MCF 10A (cell line): ENCODE measurements at regions of chr7 and their contacts with region 1.

Region 1: DNA sequence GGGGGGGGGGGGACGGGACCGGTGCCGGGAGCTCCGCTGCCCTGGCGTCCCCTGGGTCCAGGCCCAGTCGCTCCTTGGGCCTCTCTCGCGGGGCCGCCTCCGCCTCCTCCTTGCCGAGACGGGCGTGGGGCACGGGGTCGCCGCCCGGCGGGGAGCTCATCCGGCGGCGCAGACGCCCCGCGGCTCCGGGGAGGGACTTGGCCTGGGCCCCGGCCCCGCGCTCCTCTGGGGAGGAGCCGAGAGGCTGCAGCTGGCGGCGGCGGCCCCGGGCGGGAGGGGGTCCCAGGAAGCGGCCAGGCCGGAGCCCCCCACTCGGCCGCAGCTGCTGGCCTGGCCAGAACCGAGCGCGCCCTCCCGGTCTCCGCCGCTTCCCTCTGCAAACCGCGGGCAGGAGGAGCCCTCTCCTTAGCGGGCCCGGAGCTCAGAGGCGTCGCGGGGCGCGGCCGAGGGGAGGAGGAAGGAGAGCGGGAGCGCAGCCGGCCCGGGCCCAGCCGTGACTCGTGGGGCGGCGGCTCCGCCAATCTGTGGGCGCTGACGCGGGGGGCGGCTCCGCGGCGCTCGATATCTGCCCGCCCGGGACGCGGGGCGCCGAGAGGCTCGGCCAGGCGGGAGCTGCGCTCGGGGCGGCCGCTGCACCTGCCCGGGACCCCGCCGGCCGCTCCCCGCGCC is at the start of gene FAM20C:
- DNase-seq: peak; percentile 84
- H3K4me3 Mint-ChIP-seq: peak within 1 kb of the TSS; percentile 75
- H3K27ac Mint-ChIP-seq: no peak within 1 kb of the TSS
- H3K4me1 Mint-ChIP-seq: peaks cover 14% of the 10 kb centered on the region
- H3K27me3 Mint-ChIP-seq: no peaks in the 10 kb centered on the region
- CTCF ChIP-seq: no peak
- total RNA-seq, gene FAM20C: 8.8 and 14.2 TPM in 2 replicates

Region 2: DNA sequence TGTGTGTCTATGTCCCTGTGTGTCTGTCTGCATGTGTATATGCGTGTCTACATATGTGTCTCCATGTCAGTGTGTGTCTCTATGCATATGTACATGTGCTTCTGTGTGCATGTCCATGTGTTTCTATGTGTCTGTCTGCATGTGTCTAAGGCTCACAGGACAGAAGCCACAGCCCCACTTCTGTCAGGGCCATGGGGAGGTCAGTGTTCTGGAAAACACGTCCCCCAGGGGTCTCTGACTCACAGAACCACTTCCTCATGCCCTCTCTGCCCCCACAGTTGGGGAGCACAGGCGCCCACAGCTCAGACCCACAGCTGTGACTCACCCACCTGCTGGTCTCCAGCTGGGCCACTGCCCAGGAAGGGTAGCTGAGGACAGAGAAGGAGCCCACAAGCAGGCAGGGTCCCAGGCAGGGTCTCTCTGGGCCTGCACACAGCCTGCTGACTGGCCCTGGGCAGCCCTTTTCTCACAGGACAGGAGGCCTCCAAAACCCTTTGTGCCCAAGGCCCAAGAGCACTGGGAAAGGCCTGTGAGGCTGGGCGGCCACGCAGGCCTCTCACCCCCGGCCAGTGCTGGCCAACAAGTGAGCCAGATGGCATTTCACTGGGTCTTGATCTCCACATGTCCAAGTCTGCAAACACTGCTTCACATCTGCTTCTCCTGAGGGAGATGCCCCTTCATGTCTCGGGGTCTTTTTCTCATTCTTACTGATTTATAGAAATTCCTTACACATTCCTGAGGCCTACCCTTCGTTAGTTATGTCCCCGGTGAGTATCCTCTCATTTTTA is 102.7 kb before region 1 on chr7:
- CTCF ChIA-PET with region 1: interaction called, 3 read pairs
- POLR2A ChIA-PET with region 1: interaction called, 11 read pairs
- intact Hi-C with region 1: no loop called
- DNase-seq: peak; percentile 93
- H3K4me3 Mint-ChIP-seq: peak overlapping the region; percentile 34
- H3K27ac Mint-ChIP-seq: peak overlapping the region; percentile 68
- H3K4me1 Mint-ChIP-seq: peaks cover 38% of the 10 kb centered on the region
- H3K27me3 Mint-ChIP-seq: no peaks in the 10 kb centered on the region
- CTCF ChIP-seq: no peak

Region 3: DNA sequence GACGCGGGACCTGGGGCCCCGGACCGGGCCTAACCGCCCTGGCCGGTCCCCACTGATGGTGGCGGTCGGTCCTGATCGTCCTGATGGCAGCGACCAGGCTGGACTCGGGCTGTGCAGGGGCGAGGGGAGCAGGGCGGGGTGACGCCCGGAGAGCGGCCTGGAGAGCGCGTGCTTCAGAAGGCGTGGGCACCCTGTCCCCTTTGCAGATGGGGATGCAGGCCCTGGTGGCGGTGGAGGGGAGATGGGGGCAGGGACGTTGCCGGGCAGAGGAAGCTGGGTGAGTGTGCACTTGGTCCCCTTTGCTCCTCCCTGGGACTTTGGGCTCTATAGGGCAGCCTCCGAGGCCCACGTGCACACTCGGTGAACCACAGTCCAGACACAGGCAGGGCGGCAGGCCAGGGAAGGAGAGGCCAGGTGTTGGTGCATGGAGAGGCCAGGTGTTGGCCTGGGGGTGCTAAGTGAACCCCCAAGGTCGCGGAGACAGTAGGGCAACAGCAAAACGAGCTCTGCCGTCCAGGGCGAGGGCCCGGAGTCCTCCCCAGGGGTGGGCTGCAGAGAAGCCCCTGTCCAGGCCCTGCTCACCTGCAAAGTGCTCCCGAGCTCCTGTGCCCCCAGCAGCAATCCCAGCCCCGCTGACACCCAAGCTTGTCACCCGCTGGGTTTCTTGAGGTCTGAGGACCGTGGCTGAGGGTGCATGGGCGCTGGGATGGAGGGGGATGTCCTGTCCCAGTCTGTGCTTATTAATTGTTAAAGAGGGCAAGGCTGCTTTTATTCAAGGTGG is 42.1 kb before region 1 on chr7:
- CTCF ChIA-PET with region 1: no interaction called
- POLR2A ChIA-PET with region 1: interaction called, 13 read pairs
- intact Hi-C with region 1: no loop called
- DNase-seq: no peak
- H3K4me3 Mint-ChIP-seq: peak overlapping the region; percentile 92
- H3K27ac Mint-ChIP-seq: peak overlapping the region; percentile 99
- H3K4me1 Mint-ChIP-seq: peaks cover 9% of the 10 kb centered on the region
- H3K27me3 Mint-ChIP-seq: no peaks in the 10 kb centered on the region
- CTCF ChIP-seq: no peak

Region 4: DNA sequence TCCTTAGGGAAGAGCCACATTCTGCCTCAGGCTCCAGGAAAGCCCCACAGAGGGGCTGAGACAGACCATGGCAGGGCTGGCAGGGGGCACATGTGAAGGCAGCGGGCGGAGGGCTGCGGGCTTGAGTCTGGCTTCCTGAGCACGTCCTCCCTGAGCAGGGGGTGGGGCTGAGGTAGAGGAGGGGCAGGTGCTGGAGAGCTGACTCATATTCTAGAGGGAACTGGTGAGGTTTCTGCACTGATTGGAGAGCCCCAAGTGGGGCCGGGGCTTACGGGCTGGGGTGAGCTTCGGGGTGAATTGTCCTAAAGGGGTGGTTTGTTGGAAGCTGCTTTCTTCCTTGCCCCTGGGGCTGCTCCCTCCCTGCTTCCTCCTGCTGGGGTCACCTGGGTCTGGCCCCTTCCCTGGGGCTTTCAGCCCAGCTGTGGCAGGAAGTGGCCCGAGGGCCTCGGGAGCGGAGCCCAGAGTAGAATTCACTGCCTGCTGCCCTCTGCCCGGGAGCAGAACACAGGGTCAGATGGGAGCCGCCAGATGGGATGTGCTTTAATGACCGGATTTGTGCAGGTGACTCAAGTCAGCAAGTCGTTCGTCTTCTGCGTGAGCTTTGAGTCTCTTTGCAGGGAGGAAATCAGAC is 48.8 kb after region 1 on chr7:
- CTCF ChIA-PET with region 1: no interaction called
- POLR2A ChIA-PET with region 1: no interaction called
- intact Hi-C with region 1: loop called (anchors 5 kb)
- DNase-seq: peak; percentile 73
- H3K4me3 Mint-ChIP-seq: peak overlapping the region; percentile 7
- H3K27ac Mint-ChIP-seq: no peak overlapping the region
- H3K4me1 Mint-ChIP-seq: peaks cover 7% of the 10 kb centered on the region
- H3K27me3 Mint-ChIP-seq: no peaks in the 10 kb centered on the region
- CTCF ChIP-seq: no peak